ENCODE measurements at regions of chr1 and their contacts with region 1.

Region 1: DNA sequence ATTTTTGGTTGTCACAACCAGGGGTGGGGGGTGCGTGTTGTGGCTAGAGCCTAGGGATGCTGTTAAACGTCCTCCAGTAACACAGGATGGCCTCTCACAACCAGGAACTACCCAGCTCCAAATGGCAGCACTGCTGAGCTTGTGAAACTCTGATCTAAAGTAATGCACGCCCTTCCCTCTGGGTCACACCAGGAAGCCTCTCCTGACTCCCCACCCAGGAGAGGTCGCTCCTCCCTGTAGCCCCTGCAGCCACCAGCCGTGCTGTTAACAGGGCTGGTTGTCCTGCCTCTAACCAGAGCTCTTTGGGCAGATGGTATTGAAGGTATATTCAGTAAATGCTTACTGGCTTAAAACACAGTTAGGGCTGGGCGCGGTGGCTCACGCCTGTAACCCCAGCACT is 73.2 kb downstream of the NKAIN1 start:
- DNase-seq: no peak
- H3K4me3 ChIP-seq: no peak overlapping the region
- H3K27ac ChIP-seq: no peak overlapping the region
- H3K4me1 ChIP-seq: peaks cover 0 to 22% (median 18%) of the 10 kb centered on the region in 4 donors
- H3K27me3 ChIP-seq: no peaks in the 10 kb centered on the region
- CTCF ChIP-seq: no peak
- EP300 ChIP-seq: no peak
- POLR2A ChIP-seq: no peak

Region 2: DNA sequence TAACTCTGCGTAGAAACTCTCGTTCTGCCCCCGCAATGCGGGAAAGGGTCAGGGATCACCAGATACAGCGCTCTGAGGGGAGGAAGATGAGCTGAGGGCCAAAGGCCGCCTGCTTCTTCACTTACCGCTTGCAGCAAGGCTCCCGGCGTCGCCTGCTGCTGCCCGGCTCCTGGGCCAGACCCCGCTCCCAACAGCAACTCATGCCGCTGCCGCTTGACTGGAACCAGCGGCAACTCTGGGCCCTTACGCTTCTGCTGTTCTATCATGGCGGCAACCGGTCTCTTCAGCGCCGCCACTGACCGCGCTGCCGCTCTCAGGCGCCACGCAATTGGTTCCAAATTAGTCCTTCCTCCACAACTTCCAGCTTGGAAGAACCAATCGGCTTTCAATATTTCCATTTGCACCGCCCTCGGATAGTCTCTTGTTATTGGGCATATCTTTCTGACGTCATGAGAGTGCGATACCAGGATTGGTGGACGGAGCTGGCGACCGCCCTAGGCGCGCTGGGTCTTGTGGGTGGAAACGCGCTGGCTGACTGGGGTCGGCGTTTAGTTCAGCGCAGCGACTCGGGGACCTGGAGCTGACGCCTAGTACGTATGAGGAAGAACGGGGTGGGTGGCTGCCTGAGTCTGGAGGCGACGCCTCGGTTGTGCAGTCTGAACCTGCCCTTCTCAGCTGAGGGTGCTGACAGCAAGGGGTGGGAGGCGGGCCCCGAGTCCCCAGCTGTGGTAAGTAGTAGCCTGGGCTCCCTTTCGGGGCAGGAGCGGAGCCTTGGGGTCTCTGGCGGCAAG is 130.2 kb after region 1 on chr1 and contains the starts of genes SNRNP40 and ZCCHC17:
- intact Hi-C with region 1: loop called (anchors 10 kb)
- DNase-seq: peak; percentile 99
- H3K4me3 ChIP-seq: peak within 1 kb of the TSS; percentile 69 to 92 (median 82)
- H3K27ac ChIP-seq: peak within 1 kb of the TSS; percentile 87 to 92 (median 90)
- H3K4me1 ChIP-seq: peaks cover 21 to 51% (median 31%) of the 10 kb centered on the region in 4 donors
- H3K27me3 ChIP-seq: no peaks in the 10 kb centered on the region
- CTCF ChIP-seq: peak in 1 of 3 experiments; percentile 16
- EP300 ChIP-seq: no peak
- POLR2A ChIP-seq: peak; percentile 40
- total RNA-seq, gene SNRNP40: 36.3 to 45.7 (median 40.6) TPM
- total RNA-seq, gene ZCCHC17: 20.9 to 29.6 (median 26.1) TPM

Measured in esophagus muscularis mucosa (tissue), 4 donors.